Dendritic cell treated with granulocyte-macrophage colony-stimulating factor and Interleukin-4, amounts not matched to agents 40 ng/mL and 50 ng/mL, for 4 days (primary cell): ENCODE measurements at regions of chr19 and their contacts with region 1.

Region 1: DNA sequence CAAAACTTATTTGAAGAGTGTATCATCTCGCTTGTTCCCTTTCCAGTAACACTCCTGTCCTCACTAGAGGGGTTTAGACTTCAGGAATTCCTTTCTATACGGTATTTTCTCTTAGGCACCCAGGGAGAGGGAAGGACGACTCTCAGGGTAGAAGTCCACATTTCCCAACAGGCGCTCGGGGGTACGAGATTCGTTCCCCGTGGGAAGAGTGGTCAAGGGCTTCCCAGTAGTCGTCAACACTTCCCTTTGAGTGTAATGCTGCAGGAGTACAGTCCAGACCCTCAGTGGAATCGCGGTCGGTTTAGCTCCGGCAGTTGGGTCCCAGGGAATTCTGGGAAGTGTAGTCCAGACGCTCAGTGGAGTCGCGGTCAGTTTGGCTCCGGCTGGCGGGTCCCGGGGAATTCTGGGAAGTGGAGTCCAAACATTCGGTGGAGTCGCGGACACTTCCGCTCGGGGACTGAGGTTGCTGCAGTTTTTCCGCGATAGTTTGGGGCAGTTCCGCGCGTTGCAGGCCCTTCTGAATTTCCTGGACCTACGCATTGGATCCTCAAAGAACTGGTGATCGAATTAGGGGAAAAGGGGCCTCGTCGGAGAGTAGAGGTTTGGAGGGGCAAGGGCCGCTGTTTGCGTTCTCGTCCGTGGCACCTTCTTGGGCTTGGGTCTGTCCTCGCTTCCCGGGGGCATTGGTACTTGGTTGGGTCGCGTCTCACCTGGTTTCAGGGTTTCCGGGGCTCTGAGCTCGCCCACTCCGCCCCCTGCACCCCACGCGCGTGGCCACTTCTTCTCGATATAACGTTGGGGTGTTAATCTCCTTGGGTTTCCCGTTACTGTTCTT is at the start of gene ZNF224:
- H3K4me3 Mint-ChIP-seq: peak within 1 kb of the TSS; percentile 95
- H3K27ac Mint-ChIP-seq: peak within 1 kb of the TSS; percentile 93
- H3K4me1 Mint-ChIP-seq: peaks cover 7% of the 10 kb centered on the region
- H3K27me3 Mint-ChIP-seq: peaks cover 3% of the 10 kb centered on the region

Region 2: DNA sequence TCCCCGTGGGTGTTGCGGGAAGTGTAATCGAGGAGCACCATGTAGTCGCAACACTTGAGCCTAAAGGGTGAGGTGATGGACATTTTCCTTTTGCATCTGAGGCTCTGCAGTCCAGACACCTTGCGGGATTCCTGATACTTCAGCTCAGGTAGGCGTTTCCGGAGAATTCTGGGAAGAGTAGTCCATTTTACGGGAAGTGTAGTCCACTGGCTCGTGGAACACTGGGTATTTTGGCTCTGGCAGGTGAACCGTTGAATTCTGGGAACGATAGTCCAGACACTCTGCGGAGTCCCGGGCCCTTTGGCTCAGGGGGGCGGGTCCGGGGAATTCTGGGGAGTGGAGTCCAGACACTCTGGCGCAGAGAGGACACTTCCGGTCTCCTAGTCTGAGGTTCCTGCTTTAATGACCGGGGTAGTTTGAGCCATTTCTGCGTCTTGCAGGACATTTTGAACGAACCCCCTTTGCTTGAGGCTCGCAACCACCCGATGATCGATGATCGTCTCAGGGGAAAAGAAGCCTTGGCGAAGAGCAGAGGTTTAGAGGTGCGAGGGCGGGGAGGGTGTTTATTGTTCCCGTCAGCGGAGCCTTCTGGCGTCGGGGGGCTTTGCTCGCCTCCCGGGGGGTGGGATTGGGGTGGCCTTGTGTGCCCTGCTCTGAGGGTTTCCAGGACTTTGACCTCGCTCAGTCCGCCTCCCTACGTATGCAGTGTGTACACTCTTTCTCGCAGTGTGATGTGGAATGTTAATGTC is 42.3 kb before region 1 on chr19 and contains the start of gene ZNF223:
- intact Hi-C with region 1: loop called (anchors 5 kb)
- H3K4me3 Mint-ChIP-seq: peak within 1 kb of the TSS; percentile 88
- H3K27ac Mint-ChIP-seq: peak within 1 kb of the TSS; percentile 90
- H3K4me1 Mint-ChIP-seq: peaks cover 21% of the 10 kb centered on the region
- H3K27me3 Mint-ChIP-seq: peaks cover 18% of the 10 kb centered on the region

Region 3: DNA sequence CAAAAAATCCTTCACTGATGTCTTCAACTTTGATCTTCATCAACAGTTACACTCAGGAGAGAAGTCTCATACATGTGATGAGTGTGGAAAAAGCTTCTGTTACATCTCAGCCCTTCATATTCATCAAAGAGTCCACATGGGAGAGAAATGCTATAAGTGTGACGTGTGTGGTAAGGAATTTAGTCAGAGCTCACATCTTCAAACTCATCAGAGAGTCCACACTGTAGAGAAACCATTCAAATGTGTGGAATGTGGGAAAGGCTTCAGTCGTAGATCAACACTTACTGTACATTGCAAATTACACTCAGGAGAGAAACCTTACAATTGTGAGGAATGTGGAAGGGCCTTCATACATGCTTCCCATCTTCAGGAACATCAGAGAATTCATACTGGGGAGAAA is 62.3 kb after region 1 on chr19:
- intact Hi-C with region 1: no loop called
- H3K4me3 Mint-ChIP-seq: no peak overlapping the region
- H3K27ac Mint-ChIP-seq: no peak overlapping the region
- H3K4me1 Mint-ChIP-seq: no peaks in the 10 kb centered on the region
- H3K27me3 Mint-ChIP-seq: no peaks in the 10 kb centered on the region